H1 (cell line): ENCODE measurements at regions of chr18 and their contacts with region 1.

Region 1: DNA sequence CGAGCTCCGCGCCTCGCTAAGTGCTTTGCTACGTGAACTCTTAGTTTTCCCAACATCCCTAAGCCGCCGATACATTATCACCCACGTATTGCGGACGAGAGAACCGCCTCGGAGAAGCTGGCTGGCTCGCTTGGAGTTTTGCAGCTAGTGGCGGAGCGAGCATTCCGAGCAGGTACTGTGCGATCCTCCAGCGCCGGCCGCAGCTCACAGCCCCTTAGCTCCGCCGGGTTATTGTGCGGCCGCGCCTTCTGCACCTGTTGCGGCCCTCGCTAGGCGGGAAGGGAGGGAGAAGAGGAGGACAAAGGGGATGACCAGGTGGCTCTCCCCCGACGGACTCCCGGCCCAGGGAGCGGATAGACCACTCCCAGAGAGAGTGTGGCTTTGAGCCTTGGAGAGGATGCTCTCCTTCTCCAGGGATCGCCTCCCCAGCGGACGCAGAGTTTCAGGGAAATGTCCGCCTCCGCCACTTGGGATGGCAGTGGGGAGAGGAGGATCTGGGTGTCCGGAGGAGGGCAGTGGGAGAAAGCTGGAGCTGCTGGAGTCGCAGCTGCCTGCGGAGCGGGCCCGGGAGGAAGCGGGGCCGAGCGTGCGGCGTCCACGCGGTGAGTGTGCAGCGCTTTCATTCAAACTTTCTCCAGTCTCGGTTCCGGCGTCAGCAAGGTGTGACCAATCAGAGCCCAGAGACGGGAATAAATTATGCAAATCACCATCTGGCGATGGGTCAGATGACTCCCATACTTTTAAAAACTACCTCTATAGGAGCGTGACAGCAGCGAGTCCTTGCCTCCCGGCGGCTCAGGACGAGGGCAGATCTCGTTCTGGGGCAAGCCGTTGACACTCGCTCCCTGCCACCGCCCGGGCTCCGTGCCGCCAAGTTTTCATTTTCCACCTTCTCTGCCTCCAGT is at the start of gene LIPG:
- DNase-seq: peak; percentile 53 to 81
- H3K4me3 ChIP-seq: peak within 1 kb of the TSS; percentile 57 to 74 (median 62)
- H3K27ac ChIP-seq: peak within 1 kb of the TSS; percentile 57; the same call in 1 of the 2 replicates
- H3K4me1 ChIP-seq: peaks cover 4 to 6% (median 4%) of the 10 kb centered on the region in 4 experiments
- H3K27me3 ChIP-seq: peaks cover 0 to 27% (median 17%) of the 10 kb centered on the region in 4 experiments; a peak in 6 of 7 replicates
- CTCF ChIP-seq: no peak
- EP300 ChIP-seq: no peak
- POLR2A ChIP-seq: peak; percentile 74 to 89
- RAD21 ChIP-seq: no peak
- total RNA-seq, gene LIPG: 9.8 and 11.8 TPM in 2 replicates

Region 2: DNA sequence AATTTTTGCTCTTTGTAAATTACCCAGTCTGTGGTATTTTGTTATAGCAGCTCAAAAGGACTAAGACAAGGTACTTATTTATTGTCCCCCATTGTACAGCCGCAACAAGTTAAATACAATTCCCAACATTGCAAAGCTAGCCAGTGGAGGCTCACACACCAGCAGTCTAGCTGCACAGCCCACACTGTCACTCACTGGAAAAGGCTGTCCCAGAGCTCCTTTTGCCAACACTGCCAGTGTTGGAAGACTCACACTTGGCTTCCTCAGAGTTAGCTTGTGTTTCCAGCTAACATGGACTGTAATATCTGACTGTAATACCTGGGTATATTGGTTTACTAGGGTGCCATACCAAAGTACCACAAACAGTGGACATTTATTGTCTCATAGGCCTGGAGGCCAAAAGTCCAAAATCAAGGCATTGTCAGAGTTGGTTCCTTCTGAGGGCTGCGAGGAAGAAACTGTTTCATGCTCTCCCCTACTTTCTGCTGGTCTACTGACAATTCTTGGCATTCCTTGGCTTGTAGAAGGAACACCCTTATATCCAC is 94.5 kb before region 1 on chr18:
- CTCF ChIA-PET with region 1: no interaction called
- POLR2A ChIA-PET with region 1: no interaction called
- DNase-seq: no peak
- H3K4me3 ChIP-seq: no peak overlapping the region
- H3K27ac ChIP-seq: no peak overlapping the region
- H3K4me1 ChIP-seq: peaks cover 0 to 14% (median 7%) of the 10 kb centered on the region in 4 experiments; a peak in 4 of 7 replicates
- H3K27me3 ChIP-seq: no peaks in the 10 kb centered on the region
- CTCF ChIP-seq: no peak
- EP300 ChIP-seq: no peak
- POLR2A ChIP-seq: no peak
- RAD21 ChIP-seq: no peak

Region 3: DNA sequence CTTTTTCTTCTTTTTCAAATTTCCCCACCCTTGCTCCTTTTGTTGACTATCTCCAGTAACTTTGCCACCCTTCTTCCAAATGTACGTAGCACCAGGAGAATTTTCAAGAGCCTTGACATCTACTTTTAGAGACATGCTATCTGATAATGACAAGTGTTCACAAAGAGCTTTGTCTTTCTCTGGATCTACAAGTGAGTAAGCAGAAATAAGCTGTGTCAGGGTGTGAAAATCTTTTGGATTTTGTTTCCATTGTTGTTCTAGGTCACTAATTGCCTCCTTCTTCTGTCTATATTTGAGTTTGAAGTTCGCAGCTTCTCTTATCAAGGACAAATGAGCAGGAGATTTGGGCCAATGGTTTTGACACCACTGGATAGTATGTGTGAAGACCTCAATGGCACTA is 66.1 kb before region 1 on chr18:
- CTCF ChIA-PET with region 1: no interaction called
- POLR2A ChIA-PET with region 1: no interaction called
- DNase-seq: no peak
- H3K4me3 ChIP-seq: no peak overlapping the region
- H3K27ac ChIP-seq: no peak overlapping the region
- H3K4me1 ChIP-seq: peaks cover 5 to 13% (median 10%) of the 10 kb centered on the region in 4 experiments; a peak in 5 of 7 replicates
- H3K27me3 ChIP-seq: no peaks in the 10 kb centered on the region
- CTCF ChIP-seq: no peak
- EP300 ChIP-seq: no peak
- POLR2A ChIP-seq: no peak
- RAD21 ChIP-seq: no peak

Region 4: GRCh38 chr18:49628881-49629795 is 67.6 kb after region 1 on chr18:
- CTCF ChIA-PET with region 1: interaction called, 11 read pairs
- POLR2A ChIA-PET with region 1: no interaction called
- DNase-seq: no peak
- H3K4me3 ChIP-seq: no peak overlapping the region
- H3K27ac ChIP-seq: no peak overlapping the region
- H3K4me1 ChIP-seq: peaks cover 0 to 5% (median 0%) of the 10 kb centered on the region in 4 experiments; a peak in 3 of 7 replicates
- H3K27me3 ChIP-seq: no peaks in the 10 kb centered on the region
- CTCF ChIP-seq: peak; percentile 35 to 53 (median 42)
- EP300 ChIP-seq: no peak
- POLR2A ChIP-seq: no peak
- RAD21 ChIP-seq: peak; percentile 24 to 27; a peak in 2 of 4 replicates

Region 5: GRCh38 chr18:49716035-49716434 is 154.5 kb after region 1 on chr18:
- CTCF ChIA-PET with region 1: no interaction called
- POLR2A ChIA-PET with region 1: no interaction called
- DNase-seq: no peak
- H3K4me3 ChIP-seq: no peak overlapping the region
- H3K27ac ChIP-seq: no peak overlapping the region
- H3K4me1 ChIP-seq: no peaks in the 10 kb centered on the region
- H3K27me3 ChIP-seq: no peaks in the 10 kb centered on the region
- CTCF ChIP-seq: no peak
- EP300 ChIP-seq: no peak
- POLR2A ChIP-seq: no peak
- RAD21 ChIP-seq: no peak

Region 6: GRCh38 chr18:49768051-49768391 is 206.5 kb after region 1 on chr18:
- CTCF ChIA-PET with region 1: interaction called, 22 read pairs
- POLR2A ChIA-PET with region 1: no interaction called
- DNase-seq: peak; percentile 69 to 74
- H3K4me3 ChIP-seq: no peak overlapping the region
- H3K27ac ChIP-seq: no peak overlapping the region
- H3K4me1 ChIP-seq: peaks cover 0 to 6% (median 3%) of the 10 kb centered on the region in 4 experiments; a peak in 4 of 7 replicates
- H3K27me3 ChIP-seq: no peaks in the 10 kb centered on the region
- CTCF ChIP-seq: peak; percentile 85 to 88 (median 88)
- EP300 ChIP-seq: no peak
- POLR2A ChIP-seq: no peak
- RAD21 ChIP-seq: peak; percentile 97

Region 7: DNA sequence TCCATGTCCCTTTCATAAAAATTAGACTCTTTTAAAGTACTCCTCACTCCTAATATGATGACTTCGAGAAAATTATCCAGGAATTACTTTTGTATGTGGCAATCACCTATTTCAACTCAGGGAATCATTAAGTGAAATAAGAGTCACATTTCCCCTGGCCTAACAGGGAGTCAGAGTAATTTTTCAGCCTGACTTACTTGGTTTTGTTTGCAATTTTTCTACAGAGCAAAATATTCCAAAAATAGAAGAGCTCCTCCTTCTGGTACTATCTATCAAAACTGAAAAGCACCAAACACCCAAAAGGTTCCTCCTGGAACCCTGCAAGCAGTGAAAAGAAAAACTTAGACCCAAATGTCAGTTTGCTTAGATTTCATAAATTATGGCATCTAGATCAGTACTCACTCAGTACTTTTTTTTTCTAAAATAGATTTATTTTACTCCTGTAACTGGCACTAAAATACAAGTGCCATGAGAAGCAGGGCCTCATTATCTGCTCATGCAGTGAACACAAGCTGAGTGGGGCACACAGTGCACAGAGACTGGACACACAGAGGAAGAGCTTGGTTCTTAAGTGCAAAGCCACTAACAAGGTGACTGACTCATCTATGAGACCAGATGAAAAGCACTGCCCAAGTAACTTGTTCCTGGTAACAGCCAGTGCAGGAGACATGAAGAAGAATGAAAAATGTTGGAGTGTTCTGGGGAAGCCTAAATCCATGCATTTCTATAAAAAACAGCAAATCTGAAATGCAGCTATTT is 223.1 kb after region 1 on chr18:
- CTCF ChIA-PET with region 1: interaction called, 11 read pairs
- POLR2A ChIA-PET with region 1: no interaction called
- DNase-seq: no peak
- H3K4me3 ChIP-seq: no peak overlapping the region
- H3K27ac ChIP-seq: no peak overlapping the region
- H3K4me1 ChIP-seq: no peaks in the 10 kb centered on the region
- H3K27me3 ChIP-seq: no peaks in the 10 kb centered on the region
- CTCF ChIP-seq: no peak
- EP300 ChIP-seq: no peak
- POLR2A ChIP-seq: no peak
- RAD21 ChIP-seq: no peak